ENCODE measurements at regions of chr1 and their contacts with region 1.

Region 1: DNA sequence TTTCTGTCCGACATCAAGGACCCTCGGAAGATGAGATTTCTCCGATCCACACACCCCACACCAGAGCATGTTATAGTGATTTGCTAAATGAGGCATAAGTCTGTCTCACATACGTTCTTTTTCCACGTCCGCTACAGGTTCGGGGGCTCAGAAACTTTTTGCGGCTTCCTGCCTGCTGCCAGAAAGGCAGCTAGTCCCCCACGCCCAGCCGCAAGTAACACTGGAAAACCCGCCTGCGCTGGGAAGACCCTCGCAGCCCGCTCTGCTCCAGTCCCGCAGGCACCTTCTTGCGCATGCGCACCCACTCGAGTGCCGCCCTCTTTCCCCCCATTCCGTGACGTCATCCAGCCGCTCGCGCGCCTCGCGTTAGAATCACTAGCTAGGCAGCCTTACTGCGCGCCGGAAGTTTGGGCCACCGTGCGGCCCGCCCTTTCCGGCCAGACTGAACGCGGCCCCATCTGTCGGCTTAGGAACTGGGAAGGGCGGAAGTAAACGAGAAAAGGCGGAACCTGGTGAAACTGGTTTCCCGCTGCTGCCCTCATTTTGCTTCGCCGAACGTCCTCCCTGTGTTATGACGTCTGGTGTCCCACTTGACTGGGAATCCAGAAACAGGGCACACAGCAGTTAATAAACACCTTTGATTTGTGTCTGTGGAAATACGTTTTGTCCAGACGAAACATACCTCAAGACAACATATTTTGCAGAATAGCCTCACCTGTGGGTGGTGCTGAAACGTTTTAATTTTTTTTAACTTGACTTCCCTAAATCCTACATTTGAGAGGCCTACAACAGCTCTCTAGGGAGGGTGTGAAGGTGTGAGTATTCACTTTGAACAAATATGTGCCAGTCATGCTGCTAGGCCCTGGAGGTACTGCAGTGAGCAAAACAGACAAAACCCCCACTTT is at the start of gene C1orf74:
- H3K4me3 Mint-ChIP-seq: peak within 1 kb of the TSS; percentile 97
- H3K27ac Mint-ChIP-seq: peak within 1 kb of the TSS; percentile 96
- H3K4me1 Mint-ChIP-seq: peaks cover 19% of the 10 kb centered on the region
- H3K27me3 Mint-ChIP-seq: peaks cover 15% of the 10 kb centered on the region

Region 2: GRCh38 chr1:209368864-209369598 is 415.5 kb before region 1 on chr1:
- intact Hi-C with region 1: no loop called
- H3K4me3 Mint-ChIP-seq: no peak overlapping the region
- H3K27ac Mint-ChIP-seq: no peak overlapping the region
- H3K4me1 Mint-ChIP-seq: no peaks in the 10 kb centered on the region
- H3K27me3 Mint-ChIP-seq: peaks cover 12% of the 10 kb centered on the region

Region 3: DNA sequence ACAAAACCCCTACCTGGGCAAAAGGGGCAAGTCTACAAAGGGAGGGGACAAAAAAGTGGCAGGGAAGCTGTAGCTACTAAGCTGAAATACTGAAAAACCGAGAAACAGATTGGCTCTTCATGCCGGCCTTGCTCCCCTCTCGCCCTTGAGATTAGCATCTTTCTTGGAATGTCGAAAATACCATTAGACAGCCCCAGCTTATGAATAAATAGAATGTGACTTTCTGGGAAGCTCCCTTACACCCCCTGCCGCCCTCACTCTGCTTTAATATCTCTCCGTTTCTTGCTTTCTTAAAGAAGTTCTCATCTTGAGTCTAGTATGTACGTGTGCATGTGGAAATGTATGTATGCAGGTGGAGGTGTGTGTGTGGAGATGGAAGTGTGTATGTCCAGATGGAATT is 14.5 kb before region 1 on chr1:
- intact Hi-C with region 1: loop called (anchors 1 kb)
- H3K4me3 Mint-ChIP-seq: no peak overlapping the region
- H3K27ac Mint-ChIP-seq: no peak overlapping the region
- H3K4me1 Mint-ChIP-seq: peaks cover 39% of the 10 kb centered on the region
- H3K27me3 Mint-ChIP-seq: no peaks in the 10 kb centered on the region

Region 4: DNA sequence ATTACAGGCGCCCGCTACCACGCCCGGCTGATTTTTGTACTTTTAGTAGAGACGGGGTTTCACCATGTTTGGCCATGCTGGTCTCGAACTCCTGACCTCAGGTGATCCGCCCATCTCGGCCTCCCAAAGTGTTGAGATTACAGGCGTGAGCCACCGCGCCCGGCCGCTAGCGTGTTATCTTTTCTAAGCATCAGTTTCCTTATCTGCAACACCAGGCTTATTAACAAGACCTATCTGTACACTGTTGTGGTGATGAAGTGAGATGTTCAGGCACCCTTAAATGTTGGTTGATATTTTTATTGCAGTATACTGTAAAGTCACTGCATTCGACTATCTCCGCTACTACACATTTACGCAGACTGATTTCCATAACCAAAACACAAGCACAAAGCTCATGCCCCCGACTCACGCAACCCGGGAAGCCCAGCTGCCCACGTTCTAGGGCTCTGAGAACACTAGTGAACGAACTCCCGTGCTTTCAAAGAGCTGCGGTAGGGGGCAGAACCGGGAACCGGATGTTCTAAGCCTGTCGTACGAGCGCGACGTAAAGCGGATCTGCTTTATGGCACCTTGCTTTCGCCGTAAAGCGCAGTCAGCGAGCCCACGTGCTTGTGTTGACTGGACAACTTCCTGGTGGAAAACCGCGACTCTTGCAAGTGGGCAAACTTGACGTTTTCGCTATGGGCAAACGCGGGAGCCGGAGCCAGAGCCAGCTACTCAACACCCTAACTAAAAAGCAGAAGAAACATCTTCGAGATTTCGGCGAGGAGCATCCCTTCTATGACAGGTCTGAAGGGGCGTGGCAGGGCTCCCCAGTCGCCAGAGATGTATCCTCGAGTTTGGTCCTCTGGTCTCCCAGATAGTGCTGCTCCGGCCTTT is 43.1 kb after region 1 on chr1 and contains the start of gene UTP25:
- intact Hi-C with region 1: loop called (anchors 2 kb)
- H3K4me3 Mint-ChIP-seq: peak within 1 kb of the TSS; percentile 92
- H3K27ac Mint-ChIP-seq: peak within 1 kb of the TSS; percentile 92
- H3K4me1 Mint-ChIP-seq: peaks cover 23% of the 10 kb centered on the region
- H3K27me3 Mint-ChIP-seq: peaks cover 11% of the 10 kb centered on the region